ENCODE measurements at regions of chr9 and their contacts with region 1.

Region 1: GRCh38 chr9:130235897-130236668 is 29.5 kb upstream of the HMCN2 start:
- DNase-seq: no peak
- ATAC-seq: peak; percentile 49
- H3K4me3 ChIP-seq: no peak overlapping the region
- H3K27ac ChIP-seq: no peak overlapping the region; the same call in 1 of the 2 replicates
- H3K4me1 ChIP-seq: peaks cover 0 to 12% of the 10 kb centered on the region in 2 experiments; a peak in 1 of 4 replicates
- H3K27me3 ChIP-seq: no peaks in the 10 kb centered on the region
- CTCF ChIP-seq: peak; percentile 86 to 98 (median 97)
- POLR2A ChIP-seq: no peak
- RAD21 ChIP-seq: peak; percentile 89

Region 2: GRCh38 chr9:130107234-130107861 is 128.7 kb before region 1 on chr9:
- CTCF ChIA-PET with region 1: interaction called, 7 read pairs
- POLR2A ChIA-PET with region 1: no interaction called
- RAD21 ChIA-PET with region 1: interaction called in 1 of 2 experiments, 5 read pairs
- intact Hi-C with region 1: loop called (anchors 1 kb)
- DNase-seq: peak; percentile 45
- ATAC-seq: peak; percentile 92
- H3K4me3 ChIP-seq: no peak overlapping the region
- H3K27ac ChIP-seq: no peak overlapping the region
- H3K4me1 ChIP-seq: no peaks in the 10 kb centered on the region
- H3K27me3 ChIP-seq: no peaks in the 10 kb centered on the region
- CTCF ChIP-seq: peak; percentile 69 to 92 (median 82)
- POLR2A ChIP-seq: no peak
- RAD21 ChIP-seq: peak; percentile 92

Region 3: GRCh38 chr9:130254752-130255630 is 18.9 kb after region 1 on chr9:
- CTCF ChIA-PET with region 1: no interaction called
- POLR2A ChIA-PET with region 1: no interaction called
- RAD21 ChIA-PET with region 1: no interaction called
- intact Hi-C with region 1: no loop called
- DNase-seq: no peak
- ATAC-seq: no peak
- H3K4me3 ChIP-seq: no peak overlapping the region
- H3K27ac ChIP-seq: no peak overlapping the region
- H3K4me1 ChIP-seq: no peaks in the 10 kb centered on the region
- H3K27me3 ChIP-seq: 0 out of 2 replicates have a peak, but pooled peaks cover under 1% of the 10 kb centered on the region
- CTCF ChIP-seq: no peak
- POLR2A ChIP-seq: no peak
- RAD21 ChIP-seq: no peak

Region 4: GRCh38 chr9:130912932-130913598 is 677.0 kb after region 1 on chr9:
- CTCF ChIA-PET with region 1: no interaction called
- POLR2A ChIA-PET with region 1: no interaction called
- RAD21 ChIA-PET with region 1: no interaction called
- intact Hi-C with region 1: no loop called
- DNase-seq: no peak
- ATAC-seq: no peak
- H3K4me3 ChIP-seq: no peak overlapping the region
- H3K27ac ChIP-seq: no peak overlapping the region
- H3K4me1 ChIP-seq: no peaks in the 10 kb centered on the region
- H3K27me3 ChIP-seq: no peaks in the 10 kb centered on the region
- CTCF ChIP-seq: no peak
- POLR2A ChIP-seq: no peak
- RAD21 ChIP-seq: no peak

Measured in HCT116 (cell line).